ENCODE measurements at regions of chr17 and their contacts with region 1.

Region 1: GRCh38 chr17:56779898-56780733 is 53.6 kb downstream of the C17orf67 start:
- DNase-seq: peak; percentile 81 to 92 (median 88)
- ATAC-seq: peak; percentile 99
- H3K4me3 ChIP-seq: peak overlapping the region; percentile 62
- H3K4me3 Mint-ChIP-seq: peak overlapping the region; percentile 87 to 99 (median 92)
- H3K27ac ChIP-seq: peak overlapping the region; percentile 82
- H3K27ac Mint-ChIP-seq: peak overlapping the region; percentile 92 to 100 (median 96)
- H3K4me1 ChIP-seq: peaks cover 0 to 18% of the 10 kb centered on the region in 2 donors
- H3K4me1 Mint-ChIP-seq: peaks cover 19 to 37% (median 31%) of the 10 kb centered on the region in 7 donors
- H3K27me3 ChIP-seq: no peaks in the 10 kb centered on the region
- H3K27me3 Mint-ChIP-seq: peaks cover 0 to 5% (median 0%) of the 10 kb centered on the region in 5 donors

Region 2: DNA sequence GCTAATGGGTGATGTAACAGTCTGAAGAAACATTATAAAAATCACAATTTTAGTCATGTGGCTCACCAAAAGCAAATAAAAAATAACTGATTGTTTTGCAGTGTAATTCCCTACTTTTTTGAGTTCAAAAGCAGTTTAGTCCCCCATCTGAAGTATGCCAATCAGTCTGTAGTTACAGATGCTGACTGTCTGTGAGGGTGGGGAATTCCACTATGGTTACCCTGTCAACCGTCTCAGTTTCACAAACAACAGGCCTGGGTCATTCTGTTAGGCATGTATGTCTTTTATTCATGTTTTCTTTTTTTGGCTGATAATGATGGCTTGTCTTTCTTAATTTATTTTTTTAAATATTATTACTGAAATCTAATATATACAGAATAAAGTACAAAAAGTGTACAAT is 1742.3 kb before region 1 on chr17:
- CTCF ChIA-PET with region 1: no interaction called
- POLR2A ChIA-PET with region 1: no interaction called
- intact Hi-C with region 1: no loop called
- DNase-seq: peak in 1 of 9 donors; percentile 32
- ATAC-seq: no peak
- H3K4me3 ChIP-seq: no peak overlapping the region
- H3K4me3 Mint-ChIP-seq: no peak overlapping the region
- H3K27ac ChIP-seq: no peak overlapping the region
- H3K27ac Mint-ChIP-seq: peak overlapping the region in 1 of 9 donors; percentile 25
- H3K4me1 ChIP-seq: no peaks in the 10 kb centered on the region
- H3K4me1 Mint-ChIP-seq: peaks cover 0 to 22% (median 0%) of the 10 kb centered on the region in 7 donors
- H3K27me3 ChIP-seq: no peaks in the 10 kb centered on the region
- H3K27me3 Mint-ChIP-seq: no peaks in the 10 kb centered on the region

Region 3: GRCh38 chr17:55845385-55845784 is 934.7 kb before region 1 on chr17:
- CTCF ChIA-PET with region 1: no interaction called
- POLR2A ChIA-PET with region 1: no interaction called
- intact Hi-C with region 1: loop called in 1 of 2 experiments (anchors 10 kb)
- DNase-seq: peak in 3 of 9 donors; percentile 13 to 25 (median 22)
- ATAC-seq: no peak
- H3K4me3 ChIP-seq: no peak overlapping the region
- H3K4me3 Mint-ChIP-seq: peak overlapping the region in 3 of 10 donors; percentile 9 to 14 (median 11)
- H3K27ac ChIP-seq: no peak overlapping the region
- H3K27ac Mint-ChIP-seq: no peak overlapping the region
- H3K4me1 ChIP-seq: no peaks in the 10 kb centered on the region
- H3K4me1 Mint-ChIP-seq: no peaks in the 10 kb centered on the region
- H3K27me3 ChIP-seq: no peaks in the 10 kb centered on the region
- H3K27me3 Mint-ChIP-seq: peaks cover 5 to 21% (median 12%) of the 10 kb centered on the region in 5 donors

Region 4: DNA sequence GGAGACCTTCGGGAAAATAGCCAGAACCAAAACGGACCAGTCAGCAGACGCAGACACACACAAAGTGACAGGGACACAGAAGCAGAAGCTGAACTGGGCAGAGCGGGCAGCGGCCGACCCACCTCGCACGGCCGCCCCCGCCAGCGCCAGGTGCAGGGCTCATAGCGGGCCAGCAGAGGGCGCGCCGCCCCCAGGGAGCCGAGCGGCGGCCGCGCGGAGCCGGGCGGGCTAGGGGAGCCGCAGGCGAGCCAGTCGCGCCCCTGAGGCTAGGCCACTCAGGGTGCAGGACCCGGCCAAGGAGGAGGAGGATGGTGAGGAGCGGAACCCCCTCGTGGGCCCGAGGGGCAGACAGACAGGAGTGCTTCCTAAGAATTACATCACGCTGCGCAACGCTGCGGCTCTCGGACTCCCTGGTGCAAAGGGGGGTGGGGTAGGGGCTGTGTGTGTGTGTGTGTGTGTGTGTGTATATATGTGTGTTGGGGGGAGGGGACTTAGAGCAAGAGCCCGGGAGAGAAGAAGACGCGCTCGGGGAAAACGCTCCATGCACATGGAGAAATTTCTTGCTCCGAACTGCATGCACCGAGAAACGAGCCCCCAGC is 187.5 kb before region 1 on chr17:
- CTCF ChIA-PET with region 1: interaction called, 8 read pairs
- POLR2A ChIA-PET with region 1: interaction called, 27 read pairs
- intact Hi-C with region 1: loop called (anchors 1 kb)
- DNase-seq: peak in 8 of 9 donors; percentile 65 to 87 (median 81)
- ATAC-seq: peak; percentile 82
- H3K4me3 ChIP-seq: peak overlapping the region; percentile 71
- H3K4me3 Mint-ChIP-seq: peak overlapping the region; percentile 76 to 94 (median 90)
- H3K27ac ChIP-seq: peak overlapping the region; percentile 71
- H3K27ac Mint-ChIP-seq: peak overlapping the region in 8 of 9 donors; percentile 56 to 99 (median 84)
- H3K4me1 ChIP-seq: peaks cover under 1 to 12% of the 10 kb centered on the region in 2 donors
- H3K4me1 Mint-ChIP-seq: peaks cover 5 to 22% (median 14%) of the 10 kb centered on the region in 7 donors
- H3K27me3 ChIP-seq: peaks cover 0 to 5% of the 10 kb centered on the region in 2 donors
- H3K27me3 Mint-ChIP-seq: peaks cover 0 to 61% (median 27%) of the 10 kb centered on the region in 5 donors

Region 5: DNA sequence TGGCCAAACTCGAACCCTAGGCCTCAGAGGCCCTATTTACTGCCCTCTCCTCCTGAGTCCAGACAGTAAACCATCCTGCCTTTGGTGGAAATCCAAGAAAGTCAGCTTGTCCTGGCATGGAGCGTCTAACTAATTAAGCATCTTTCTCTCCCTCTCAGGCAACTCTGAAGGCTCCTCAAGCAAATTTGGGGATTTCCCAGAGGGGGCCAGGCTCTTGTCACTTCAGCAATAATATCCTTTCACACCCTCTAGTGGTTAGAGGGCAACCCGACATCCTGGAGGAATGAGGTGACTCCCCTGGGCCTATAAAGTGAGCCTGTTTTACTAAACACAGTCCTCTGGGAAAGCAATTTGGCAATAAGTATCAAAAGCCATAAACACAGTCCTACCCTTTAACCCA is 126.2 kb before region 1 on chr17:
- CTCF ChIA-PET with region 1: interaction called, 16 read pairs
- POLR2A ChIA-PET with region 1: no interaction called
- intact Hi-C with region 1: loop called (anchors 1 kb)
- DNase-seq: peak; percentile 15 to 88 (median 83)
- ATAC-seq: peak; percentile 99
- H3K4me3 ChIP-seq: no peak overlapping the region
- H3K4me3 Mint-ChIP-seq: peak overlapping the region in 4 of 10 donors; percentile 10 to 55 (median 34)
- H3K27ac ChIP-seq: peak overlapping the region; percentile 59
- H3K27ac Mint-ChIP-seq: peak overlapping the region in 8 of 9 donors; percentile 44 to 93 (median 88)
- H3K4me1 ChIP-seq: peaks cover 0 to 6% of the 10 kb centered on the region in 2 donors
- H3K4me1 Mint-ChIP-seq: peaks cover 5 to 21% (median 9%) of the 10 kb centered on the region in 7 donors
- H3K27me3 ChIP-seq: no peaks in the 10 kb centered on the region
- H3K27me3 Mint-ChIP-seq: peaks cover 0 to 18% (median 0%) of the 10 kb centered on the region in 5 donors

Region 6: DNA sequence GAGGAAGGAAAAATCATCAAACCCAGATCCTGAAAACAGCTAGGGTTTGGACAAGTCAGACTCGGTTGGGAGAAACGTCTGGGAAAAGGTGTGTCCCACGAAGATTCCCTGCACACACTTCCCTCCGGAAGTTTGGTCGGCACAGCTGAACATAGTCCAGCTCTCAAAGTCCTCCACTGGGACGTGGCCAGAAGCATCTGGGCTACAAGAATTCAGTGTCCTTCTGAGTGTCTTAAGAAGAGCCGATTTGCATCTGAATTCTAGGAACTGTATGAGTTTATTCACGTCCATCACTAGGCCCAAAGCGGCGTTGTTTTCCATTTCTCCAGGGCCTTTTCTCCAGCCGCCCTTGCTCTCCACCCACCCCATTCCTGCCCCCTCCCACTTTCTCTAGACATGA is 55.5 kb before region 1 on chr17:
- CTCF ChIA-PET with region 1: interaction called, 63 read pairs
- POLR2A ChIA-PET with region 1: interaction called, 8 read pairs
- intact Hi-C with region 1: loop called in 1 of 2 experiments (anchors 2 kb)
- DNase-seq: no peak
- ATAC-seq: no peak
- H3K4me3 ChIP-seq: no peak overlapping the region
- H3K4me3 Mint-ChIP-seq: no peak overlapping the region
- H3K27ac ChIP-seq: no peak overlapping the region
- H3K27ac Mint-ChIP-seq: no peak overlapping the region
- H3K4me1 ChIP-seq: no peaks in the 10 kb centered on the region
- H3K4me1 Mint-ChIP-seq: no peaks in the 10 kb centered on the region
- H3K27me3 ChIP-seq: no peaks in the 10 kb centered on the region
- H3K27me3 Mint-ChIP-seq: peaks cover 0 to 3% (median 0%) of the 10 kb centered on the region in 5 donors

Region 7: DNA sequence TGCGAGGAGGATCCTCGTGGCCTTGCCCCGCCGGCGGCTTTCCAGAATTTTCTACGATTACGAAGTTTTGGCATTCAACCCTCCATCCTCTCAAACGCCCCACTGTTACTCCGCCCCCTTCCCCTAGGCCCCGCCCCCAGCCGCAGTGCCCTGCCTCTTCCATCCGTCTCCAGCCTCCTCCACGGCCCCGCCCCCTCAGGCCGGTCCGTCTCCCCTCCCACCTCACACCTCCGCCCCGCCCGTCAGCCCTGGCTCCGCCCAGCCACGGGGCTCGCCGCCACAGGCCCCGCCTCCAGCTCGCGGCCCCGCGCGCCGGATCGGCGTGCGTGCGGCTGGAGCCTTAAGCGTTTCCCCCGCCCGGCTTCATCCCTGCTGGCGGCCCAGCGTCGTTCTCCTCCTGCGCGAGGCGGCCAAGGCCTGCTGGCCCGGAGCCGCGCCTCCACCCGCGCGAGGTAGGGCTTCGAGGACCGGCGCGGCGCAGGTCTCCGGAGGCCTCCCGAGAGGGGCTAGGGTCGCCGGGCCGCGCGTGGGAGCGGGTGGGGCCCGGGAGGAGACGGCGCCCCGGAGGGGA is 53.8 kb after region 1 on chr17 and contains the starts of genes C17orf67 and DGKE:
- CTCF ChIA-PET with region 1: no interaction called
- POLR2A ChIA-PET with region 1: interaction called, 3 read pairs
- intact Hi-C with region 1: loop called in 1 of 2 experiments (anchors 2 kb)
- DNase-seq: peak; percentile 95 to 100 (median 98)
- ATAC-seq: peak; percentile 97
- H3K4me3 ChIP-seq: peak within 1 kb of the TSS; percentile 91
- H3K4me3 Mint-ChIP-seq: peak within 1 kb of the TSS; percentile 91 to 98 (median 95)
- H3K27ac ChIP-seq: peak within 1 kb of the TSS; percentile 85
- H3K27ac Mint-ChIP-seq: peak within 1 kb of the TSS; percentile 83 to 95 (median 93)
- H3K4me1 ChIP-seq: peaks cover 41 to 42% of the 10 kb centered on the region in 2 donors
- H3K4me1 Mint-ChIP-seq: peaks cover 34 to 74% (median 62%) of the 10 kb centered on the region in 7 donors
- H3K27me3 ChIP-seq: no peaks in the 10 kb centered on the region
- H3K27me3 Mint-ChIP-seq: no peaks in the 10 kb centered on the region
- total RNA-seq, gene C17orf67: 3.6 to 9.1 (median 5.4) TPM
- total RNA-seq, gene DGKE: 23.7 to 39.2 (median 35.6) TPM

Measured in naive thymus-derived CD4-positive, alpha-beta T cell (primary cell).